GM12878 (cell line): ENCODE measurements at regions of chr3 and their contacts with region 1.

Region 1: GRCh38 chr3:185968168-185968567 is 30.4 kb upstream of the TRA2B start:
- DNase-seq: no peak
- ATAC-seq: no peak
- H3K4me3 ChIP-seq: no peak overlapping the region
- H3K27ac ChIP-seq: no peak overlapping the region
- H3K4me1 ChIP-seq: no peaks in the 10 kb centered on the region
- H3K27me3 ChIP-seq: no peaks in the 10 kb centered on the region
- CTCF ChIP-seq: no peak
- EP300 ChIP-seq: no peak
- POLR2A ChIP-seq: no peak
- RAD21 ChIP-seq: no peak

Region 2: DNA sequence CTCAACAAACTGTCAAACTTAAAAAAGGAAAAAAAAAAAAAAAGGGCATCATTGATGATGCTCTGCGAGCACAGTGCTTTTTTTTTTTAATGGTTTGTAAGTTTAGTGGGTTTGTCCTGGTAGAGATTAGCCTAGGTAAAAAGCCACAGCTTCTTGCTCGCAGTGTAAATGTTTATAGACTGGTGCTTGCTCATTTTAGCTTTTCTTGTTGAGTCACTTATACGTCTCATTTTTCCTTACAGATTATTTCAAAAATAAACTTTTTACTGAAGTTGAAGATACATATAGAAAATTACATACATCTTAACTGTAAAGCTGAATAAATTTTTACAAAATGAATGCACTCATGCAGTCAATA is 13.8 kb before region 1 on chr3:
- CTCF ChIA-PET with region 1: interaction called, 13 read pairs
- POLR2A ChIA-PET with region 1: interaction called, 4 read pairs
- RAD21 ChIA-PET with region 1: no interaction called
- SMC1A ChIA-PET with region 1: interaction called, 4 read pairs
- in situ Hi-C with region 1: no loop called
- intact Hi-C with region 1: no loop called
- DNase-seq: no peak
- ATAC-seq: no peak
- H3K4me3 ChIP-seq: no peak overlapping the region
- H3K27ac ChIP-seq: no peak overlapping the region
- H3K4me1 ChIP-seq: no peaks in the 10 kb centered on the region
- H3K27me3 ChIP-seq: no peaks in the 10 kb centered on the region; a peak in 2 of 4 replicates
- CTCF ChIP-seq: no peak
- EP300 ChIP-seq: no peak
- POLR2A ChIP-seq: no peak
- RAD21 ChIP-seq: no peak